Mammary epithelial cell (primary cell): ENCODE measurements at regions of chr5 and their contacts with region 1.

Region 1: DNA sequence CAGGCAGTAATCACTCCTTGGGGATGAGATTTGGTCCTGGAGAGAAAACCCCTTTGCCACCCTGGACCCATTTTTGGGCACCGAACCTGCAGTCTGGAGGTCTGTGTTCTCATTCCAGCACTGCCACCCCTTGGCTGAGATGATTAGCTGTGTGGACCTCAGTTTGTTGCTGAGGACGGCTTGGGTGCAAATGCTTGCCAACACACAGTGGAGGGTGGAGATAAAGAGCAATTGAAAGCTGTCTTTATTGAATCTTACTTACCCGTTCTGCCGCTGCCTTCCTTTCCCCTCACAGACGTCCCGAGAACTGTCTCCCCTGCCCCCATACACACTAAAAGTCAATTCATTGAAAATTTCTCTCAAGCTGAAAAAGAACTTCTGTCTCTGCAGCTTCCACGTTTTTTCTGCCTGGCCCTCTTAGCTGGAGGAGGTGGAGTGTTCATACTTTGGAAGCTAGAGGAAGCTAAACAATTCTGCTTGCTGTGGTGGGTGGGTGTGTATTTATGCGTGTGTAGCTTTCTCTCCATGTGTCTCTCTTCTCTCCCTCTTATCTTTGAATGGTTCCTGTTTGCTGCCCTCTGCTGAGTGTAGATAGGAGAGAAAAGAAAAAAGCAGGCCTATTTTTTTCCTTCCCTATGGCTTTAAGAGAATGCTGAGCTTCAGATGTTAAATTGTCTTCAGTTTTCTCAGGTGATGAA is 6.6 kb downstream of the GALNT10 start:
- DNase-seq: no peak
- H3K4me3 ChIP-seq: no peak overlapping the region
- H3K27ac ChIP-seq: no peak overlapping the region
- H3K4me1 ChIP-seq: peaks cover 31% of the 10 kb centered on the region
- H3K27me3 ChIP-seq: peaks cover 8% of the 10 kb centered on the region
- CTCF ChIP-seq: peak in 1 of 2 donors; percentile 49

Region 2: GRCh38 chr5:154214371-154215106 is 17.4 kb after region 1 on chr5:
- CTCF ChIA-PET with region 1: no interaction called
- dilution Hi-C with region 1: no loop called
- in situ Hi-C with region 1: no loop called
- intact Hi-C with region 1: loop called (anchors 2 kb)
- DNase-seq: peak; percentile 82
- H3K4me3 ChIP-seq: no peak overlapping the region
- H3K27ac ChIP-seq: peak overlapping the region; percentile 67
- H3K4me1 ChIP-seq: peaks cover 27% of the 10 kb centered on the region
- H3K27me3 ChIP-seq: no peaks in the 10 kb centered on the region
- CTCF ChIP-seq: no peak

Region 3: DNA sequence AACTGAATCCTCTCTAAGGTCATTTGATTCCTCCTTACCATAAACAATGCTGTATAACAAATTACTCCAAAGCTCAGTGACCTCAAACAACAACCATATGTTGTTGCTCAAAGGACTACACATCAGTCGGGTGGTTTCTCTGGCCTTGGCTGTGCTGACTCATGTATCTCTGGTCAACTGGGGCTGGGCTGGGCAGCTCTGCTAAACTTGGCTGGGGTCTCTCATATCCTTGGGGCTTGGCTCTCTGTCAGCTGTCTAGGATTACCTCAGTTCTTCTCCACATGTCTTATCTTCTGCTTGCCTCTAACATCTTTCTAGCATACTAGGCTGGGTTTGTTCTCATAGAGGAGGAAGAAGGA is 79.8 kb after region 1 on chr5:
- CTCF ChIA-PET with region 1: no interaction called
- dilution Hi-C with region 1: no loop called
- in situ Hi-C with region 1: no loop called
- intact Hi-C with region 1: loop called (anchors 5 kb)
- DNase-seq: peak; percentile 25
- H3K4me3 ChIP-seq: no peak overlapping the region
- H3K27ac ChIP-seq: no peak overlapping the region
- H3K4me1 ChIP-seq: peaks cover 5% of the 10 kb centered on the region
- H3K27me3 ChIP-seq: no peaks in the 10 kb centered on the region
- CTCF ChIP-seq: no peak